GM10248 (cell line): ENCODE measurements at regions of chr11 and their contacts with region 1.

Region 1: DNA sequence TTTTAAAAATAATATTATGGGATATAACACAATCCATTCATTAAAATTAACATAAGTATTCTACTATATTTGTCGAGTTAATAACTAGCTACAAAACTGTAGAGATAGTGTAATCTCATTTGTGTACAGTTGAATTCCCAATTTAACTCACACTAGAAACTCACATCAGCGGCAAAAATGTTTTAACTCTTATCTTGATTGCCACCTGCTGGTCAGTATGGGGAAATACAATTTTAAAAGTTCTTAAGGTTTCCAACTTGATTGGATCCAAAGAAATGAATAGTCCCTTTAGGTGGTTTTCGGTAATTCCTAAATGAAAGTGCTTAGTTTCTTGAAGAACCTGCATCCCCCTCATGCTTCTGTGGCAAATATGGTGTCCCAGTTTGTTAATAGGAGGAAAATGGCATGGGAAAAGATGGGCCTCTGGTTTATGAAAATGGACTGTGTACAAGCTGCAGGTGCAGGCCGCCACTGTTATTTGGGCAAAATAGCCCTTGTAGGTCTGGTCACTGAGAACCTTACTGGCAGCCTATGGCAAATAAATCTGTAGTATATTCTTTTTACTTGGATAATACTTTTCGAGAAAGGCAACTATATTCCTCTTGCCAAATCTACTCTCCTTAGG is 33.7 kb upstream of the SLC17A6 start:
- DNase-seq: peak; percentile 20
- CTCF ChIP-seq: peak; percentile 54

Region 2: DNA sequence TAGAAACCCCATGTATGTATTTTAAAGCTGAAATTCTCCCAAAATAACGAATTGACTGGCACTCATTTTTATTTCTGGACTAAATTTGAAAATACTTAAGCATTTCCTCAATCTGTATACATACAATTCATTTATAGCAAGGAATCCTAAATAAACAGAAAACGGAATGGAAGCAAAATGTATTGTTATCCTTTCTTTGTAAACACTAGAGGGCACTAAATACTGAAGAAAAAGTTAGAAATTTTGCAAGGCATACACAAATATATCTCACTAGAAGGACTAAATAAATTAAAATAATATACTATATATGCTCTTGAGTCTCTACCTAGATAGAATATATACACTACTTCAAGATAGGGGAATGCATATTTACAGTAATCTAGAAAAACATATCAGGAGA is 134.6 kb before region 1 on chr11:
- CTCF ChIA-PET with region 1: interaction called, 56 read pairs
- POLR2A ChIA-PET with region 1: no interaction called
- DNase-seq: no peak
- CTCF ChIP-seq: peak; percentile 31